HepG2 (cell line): ENCODE measurements at regions of chr4 and their contacts with region 1.

Region 1: GRCh38 chr4:86223472-86223871 is 136.4 kb downstream of the MAPK10 start:
- DNase-seq: peak; percentile 38
- ATAC-seq: peak; percentile 92
- H3K4me3 ChIP-seq: no peak overlapping the region
- H3K27ac ChIP-seq: no peak overlapping the region
- H3K4me1 ChIP-seq: no peaks in the 10 kb centered on the region
- H3K27me3 ChIP-seq: no peaks in the 10 kb centered on the region
- CTCF ChIP-seq: peak; percentile 39
- EP300 ChIP-seq: no peak
- POLR2A ChIP-seq: no peak
- RAD21 ChIP-seq: 0 out of 2 replicates have a peak, but pooled peaks have one; percentile 14

Region 2: GRCh38 chr4:85780664-85781063 is 442.8 kb before region 1 on chr4:
- CTCF ChIA-PET with region 1: no interaction called
- POLR2A ChIA-PET with region 1: no interaction called
- in situ Hi-C with region 1: no loop called
- intact Hi-C with region 1: loop called (anchors 10 kb)
- DNase-seq: no peak
- ATAC-seq: no peak
- H3K4me3 ChIP-seq: no peak overlapping the region
- H3K27ac ChIP-seq: no peak overlapping the region
- H3K4me1 ChIP-seq: no peaks in the 10 kb centered on the region
- H3K27me3 ChIP-seq: no peaks in the 10 kb centered on the region
- CTCF ChIP-seq: no peak
- EP300 ChIP-seq: no peak
- POLR2A ChIP-seq: no peak
- RAD21 ChIP-seq: no peak

Region 3: DNA sequence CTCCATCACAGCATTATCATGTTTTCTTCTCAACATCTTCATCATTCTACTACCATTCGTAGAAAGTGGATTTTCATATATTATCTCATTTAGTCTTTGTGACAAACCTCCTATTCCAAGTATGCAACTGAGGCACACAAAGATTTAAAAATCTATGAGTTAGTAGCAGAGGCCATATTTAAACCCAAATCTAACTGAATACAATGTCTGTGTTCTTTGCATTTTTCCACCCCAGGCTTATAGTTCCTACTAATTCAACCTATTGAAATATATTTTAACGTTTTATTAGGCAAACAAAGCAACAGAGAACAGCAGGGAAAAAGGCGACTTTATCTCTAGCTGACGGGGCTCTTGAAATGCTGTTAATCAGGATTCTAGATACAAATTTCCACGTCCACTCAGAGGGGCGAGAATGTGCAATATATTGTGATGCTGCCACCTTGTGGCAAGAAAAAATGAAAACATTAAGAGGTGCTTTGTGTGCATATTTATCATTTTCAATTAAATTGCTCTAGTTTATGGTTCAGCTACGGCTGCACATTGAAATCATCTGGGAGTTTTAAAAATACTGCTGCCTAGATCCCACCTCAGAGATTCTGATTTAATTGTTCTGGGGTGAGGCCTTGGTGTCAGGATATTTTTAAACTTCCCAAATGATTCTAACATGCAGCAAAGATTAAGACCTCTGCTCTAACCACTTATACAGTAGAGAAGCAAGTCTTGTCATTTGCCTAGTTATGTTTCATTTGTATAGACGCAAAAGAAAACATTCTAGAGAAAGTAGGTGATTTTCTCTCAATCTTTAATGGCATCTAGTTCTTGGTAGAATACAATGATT is 179.5 kb before region 1 on chr4:
- CTCF ChIA-PET with region 1: no interaction called
- POLR2A ChIA-PET with region 1: no interaction called
- in situ Hi-C with region 1: no loop called
- intact Hi-C with region 1: loop called (anchors 5 kb)
- DNase-seq: peak; percentile 32
- ATAC-seq: peak; percentile 68
- H3K4me3 ChIP-seq: no peak overlapping the region
- H3K27ac ChIP-seq: no peak overlapping the region
- H3K4me1 ChIP-seq: no peaks in the 10 kb centered on the region
- H3K27me3 ChIP-seq: no peaks in the 10 kb centered on the region
- CTCF ChIP-seq: peak; percentile 62
- EP300 ChIP-seq: no peak
- POLR2A ChIP-seq: no peak
- RAD21 ChIP-seq: peak; percentile 21; the same call in 1 of the 2 replicates

Region 4: GRCh38 chr4:86279293-86279960 is 56.0 kb after region 1 on chr4:
- CTCF ChIA-PET with region 1: no interaction called
- POLR2A ChIA-PET with region 1: no interaction called
- in situ Hi-C with region 1: no loop called
- intact Hi-C with region 1: no loop called
- DNase-seq: no peak
- ATAC-seq: no peak
- H3K4me3 ChIP-seq: no peak overlapping the region
- H3K27ac ChIP-seq: no peak overlapping the region
- H3K4me1 ChIP-seq: no peaks in the 10 kb centered on the region
- H3K27me3 ChIP-seq: no peaks in the 10 kb centered on the region
- CTCF ChIP-seq: no peak
- EP300 ChIP-seq: no peak
- POLR2A ChIP-seq: no peak
- RAD21 ChIP-seq: no peak